Mammary epithelial cell (primary cell): ENCODE measurements at regions of chr20 and their contacts with region 1.

Region 1: GRCh38 chr20:18632196-18633009 is 44.5 kb downstream of the DTD1 start:
- DNase-seq: peak; percentile 20
- H3K4me3 ChIP-seq: no peak overlapping the region
- H3K27ac ChIP-seq: no peak overlapping the region
- H3K4me1 ChIP-seq: no peaks in the 10 kb centered on the region
- H3K27me3 ChIP-seq: no peaks in the 10 kb centered on the region
- CTCF ChIP-seq: peak; percentile 96 to 97

Region 2: DNA sequence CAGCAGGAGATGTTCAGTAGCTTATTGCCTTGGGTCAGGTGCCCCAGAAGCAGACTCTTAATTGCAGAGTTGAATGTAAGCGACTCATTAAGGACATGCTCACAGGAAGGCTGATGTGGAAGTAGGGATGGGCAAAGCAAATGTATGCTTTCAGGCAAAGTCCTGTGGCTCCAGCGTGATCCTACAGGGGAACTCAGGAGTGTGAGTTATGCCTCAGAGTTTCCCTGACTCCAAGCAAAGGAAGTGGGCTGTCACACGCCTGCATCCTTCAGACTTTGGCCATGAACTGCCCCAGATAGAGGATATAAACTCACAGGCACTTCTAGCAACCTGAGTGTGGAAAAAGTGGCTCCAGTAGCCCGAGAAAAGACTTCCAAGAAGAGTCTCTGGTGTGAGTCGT is 409.0 kb before region 1 on chr20:
- CTCF ChIA-PET with region 1: no interaction called
- dilution Hi-C with region 1: no loop called
- in situ Hi-C with region 1: no loop called
- intact Hi-C with region 1: no loop called
- DNase-seq: peak; percentile 41
- H3K4me3 ChIP-seq: no peak overlapping the region
- H3K27ac ChIP-seq: peak overlapping the region; percentile 42
- H3K4me1 ChIP-seq: peaks cover 30% of the 10 kb centered on the region
- H3K27me3 ChIP-seq: no peaks in the 10 kb centered on the region
- CTCF ChIP-seq: no peak

Region 3: GRCh38 chr20:18412221-18412901 is 220.0 kb before region 1 on chr20:
- CTCF ChIA-PET with region 1: no interaction called
- dilution Hi-C with region 1: no loop called
- in situ Hi-C with region 1: no loop called
- intact Hi-C with region 1: loop called (anchors 5 kb)
- DNase-seq: no peak
- H3K4me3 ChIP-seq: no peak overlapping the region
- H3K27ac ChIP-seq: no peak overlapping the region
- H3K4me1 ChIP-seq: peaks cover 19% of the 10 kb centered on the region
- H3K27me3 ChIP-seq: no peaks in the 10 kb centered on the region
- CTCF ChIP-seq: no peak

Region 4: GRCh38 chr20:18650224-18650623 is 17.8 kb after region 1 on chr20:
- CTCF ChIA-PET with region 1: no interaction called
- dilution Hi-C with region 1: no loop called
- in situ Hi-C with region 1: no loop called
- intact Hi-C with region 1: no loop called
- DNase-seq: no peak
- H3K4me3 ChIP-seq: no peak overlapping the region
- H3K27ac ChIP-seq: no peak overlapping the region
- H3K4me1 ChIP-seq: peaks cover 3% of the 10 kb centered on the region
- H3K27me3 ChIP-seq: no peaks in the 10 kb centered on the region
- CTCF ChIP-seq: no peak

Region 5: GRCh38 chr20:18793625-18794427 is 161.4 kb after region 1 on chr20:
- CTCF ChIA-PET with region 1: no interaction called
- dilution Hi-C with region 1: no loop called
- in situ Hi-C with region 1: no loop called
- intact Hi-C with region 1: loop called (anchors 10 kb)
- DNase-seq: peak; percentile 80
- H3K4me3 ChIP-seq: peak overlapping the region; percentile 60 to 79 (median 72)
- H3K27ac ChIP-seq: peak overlapping the region; percentile 78
- H3K4me1 ChIP-seq: peaks cover 5% of the 10 kb centered on the region
- H3K27me3 ChIP-seq: no peaks in the 10 kb centered on the region
- CTCF ChIP-seq: no peak

Region 6: DNA sequence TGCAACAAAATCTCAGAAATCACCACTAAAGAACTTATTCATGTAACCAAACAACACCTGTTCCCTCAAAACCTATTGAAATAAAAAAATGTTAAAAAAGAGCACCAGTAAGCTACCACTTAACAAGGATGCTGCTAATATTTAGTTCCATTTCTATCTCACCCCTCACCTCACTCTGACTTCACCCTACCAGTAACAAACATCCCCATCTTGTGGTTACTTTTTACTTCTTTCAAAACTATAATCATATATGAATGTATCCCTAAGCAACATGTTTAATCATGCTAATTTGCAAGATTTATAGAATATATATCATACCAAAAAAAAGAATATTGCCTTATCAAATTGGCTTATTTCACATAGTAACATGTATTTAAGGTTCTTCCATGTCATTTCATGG is 552.7 kb after region 1 on chr20:
- CTCF ChIA-PET with region 1: no interaction called
- dilution Hi-C with region 1: no loop called
- in situ Hi-C with region 1: no loop called
- intact Hi-C with region 1: loop called (anchors 2 kb)
- DNase-seq: no peak
- H3K4me3 ChIP-seq: no peak overlapping the region
- H3K27ac ChIP-seq: no peak overlapping the region
- H3K4me1 ChIP-seq: no peaks in the 10 kb centered on the region
- H3K27me3 ChIP-seq: no peaks in the 10 kb centered on the region
- CTCF ChIP-seq: no peak

Region 7: DNA sequence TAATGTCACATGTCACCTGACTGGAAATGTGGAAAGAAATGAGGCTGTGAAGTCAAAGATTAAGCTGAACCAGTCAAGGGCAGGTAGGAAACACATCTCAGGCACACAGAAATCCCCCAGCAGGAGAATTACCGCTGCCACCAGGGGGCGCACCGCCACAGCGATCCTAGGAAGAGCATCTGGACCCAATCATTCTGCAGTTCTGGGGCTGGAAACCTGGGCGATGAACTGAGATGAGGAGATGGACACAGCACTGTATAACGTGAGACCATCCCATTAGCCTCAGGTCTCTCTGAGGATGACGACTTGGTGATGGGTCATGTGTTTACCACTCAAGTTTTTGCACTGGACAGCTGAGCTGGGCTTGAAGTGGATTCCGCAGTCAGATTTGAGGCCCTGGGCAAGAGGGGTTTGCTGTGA is 573.6 kb after region 1 on chr20:
- CTCF ChIA-PET with region 1: no interaction called
- dilution Hi-C with region 1: no loop called
- in situ Hi-C with region 1: loop called in 1 of 2 experiments (anchors 25 kb)
- intact Hi-C with region 1: no loop called
- DNase-seq: peak; percentile 32
- H3K4me3 ChIP-seq: no peak overlapping the region
- H3K27ac ChIP-seq: no peak overlapping the region
- H3K4me1 ChIP-seq: no peaks in the 10 kb centered on the region
- H3K27me3 ChIP-seq: peaks cover 7% of the 10 kb centered on the region
- CTCF ChIP-seq: peak; percentile 81 to 89

Region 8: GRCh38 chr20:19583532-19584175 is 951.3 kb after region 1 on chr20:
- CTCF ChIA-PET with region 1: interaction called, 4 read pairs
- dilution Hi-C with region 1: no loop called
- in situ Hi-C with region 1: no loop called
- intact Hi-C with region 1: loop called (anchors 5 kb)
- DNase-seq: peak; percentile 22
- H3K4me3 ChIP-seq: no peak overlapping the region
- H3K27ac ChIP-seq: no peak overlapping the region
- H3K4me1 ChIP-seq: no peaks in the 10 kb centered on the region
- H3K27me3 ChIP-seq: no peaks in the 10 kb centered on the region
- CTCF ChIP-seq: peak; percentile 87 to 88

Region 9: DNA sequence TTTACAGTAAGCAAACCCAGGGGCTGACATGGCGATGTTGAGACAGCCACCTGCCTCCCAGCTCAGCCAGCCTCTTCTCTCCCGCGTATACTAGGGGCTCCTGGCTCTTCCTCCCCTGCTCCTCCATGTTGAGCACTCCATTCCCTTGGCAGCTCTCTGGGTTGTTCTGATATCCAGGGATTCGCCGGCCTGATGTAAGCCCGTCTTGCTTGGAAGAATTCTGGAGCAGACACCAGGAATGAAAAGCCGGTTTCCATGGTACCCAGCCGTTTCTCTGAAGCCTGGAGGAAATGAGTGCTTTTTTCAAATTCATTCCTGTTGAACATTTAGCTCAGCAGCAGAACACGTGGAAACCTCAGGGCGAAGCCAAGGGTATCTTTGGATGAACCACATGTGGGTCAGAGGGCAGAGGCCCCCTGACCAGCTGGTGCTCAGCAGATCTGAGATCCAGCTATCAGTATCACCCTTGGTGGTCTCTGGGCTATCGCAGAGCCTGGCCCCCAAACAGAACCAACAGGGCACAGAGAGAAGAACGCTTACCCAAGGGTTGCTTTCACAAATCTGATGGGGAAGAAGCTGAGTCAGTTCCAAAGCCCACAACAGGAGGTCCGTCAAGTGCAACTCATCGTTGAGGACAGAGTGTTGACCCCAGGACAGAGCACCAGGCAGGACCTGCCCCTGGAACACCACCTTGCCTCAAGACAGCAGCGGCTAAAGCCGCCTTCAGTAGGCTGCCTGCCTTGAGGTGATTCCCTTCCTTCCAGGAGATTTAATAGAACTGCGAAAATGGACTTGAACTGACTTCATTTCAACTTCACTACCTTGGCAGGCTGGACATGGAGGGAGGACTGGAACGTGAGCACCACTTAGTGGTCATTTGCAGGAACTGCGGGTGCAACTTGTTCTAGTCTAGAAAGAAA is 1029.6 kb after region 1 on chr20:
- CTCF ChIA-PET with region 1: no interaction called
- dilution Hi-C with region 1: no loop called
- in situ Hi-C with region 1: loop called in 1 of 2 experiments (anchors 25 kb)
- intact Hi-C with region 1: loop called (anchors 2 kb)
- DNase-seq: peak; percentile 40
- H3K4me3 ChIP-seq: no peak overlapping the region
- H3K27ac ChIP-seq: no peak overlapping the region
- H3K4me1 ChIP-seq: no peaks in the 10 kb centered on the region
- H3K27me3 ChIP-seq: no peaks in the 10 kb centered on the region
- CTCF ChIP-seq: peak; percentile 99 to 100